ENCODE measurements at regions of chr13 and their contacts with region 1.

Region 1: DNA sequence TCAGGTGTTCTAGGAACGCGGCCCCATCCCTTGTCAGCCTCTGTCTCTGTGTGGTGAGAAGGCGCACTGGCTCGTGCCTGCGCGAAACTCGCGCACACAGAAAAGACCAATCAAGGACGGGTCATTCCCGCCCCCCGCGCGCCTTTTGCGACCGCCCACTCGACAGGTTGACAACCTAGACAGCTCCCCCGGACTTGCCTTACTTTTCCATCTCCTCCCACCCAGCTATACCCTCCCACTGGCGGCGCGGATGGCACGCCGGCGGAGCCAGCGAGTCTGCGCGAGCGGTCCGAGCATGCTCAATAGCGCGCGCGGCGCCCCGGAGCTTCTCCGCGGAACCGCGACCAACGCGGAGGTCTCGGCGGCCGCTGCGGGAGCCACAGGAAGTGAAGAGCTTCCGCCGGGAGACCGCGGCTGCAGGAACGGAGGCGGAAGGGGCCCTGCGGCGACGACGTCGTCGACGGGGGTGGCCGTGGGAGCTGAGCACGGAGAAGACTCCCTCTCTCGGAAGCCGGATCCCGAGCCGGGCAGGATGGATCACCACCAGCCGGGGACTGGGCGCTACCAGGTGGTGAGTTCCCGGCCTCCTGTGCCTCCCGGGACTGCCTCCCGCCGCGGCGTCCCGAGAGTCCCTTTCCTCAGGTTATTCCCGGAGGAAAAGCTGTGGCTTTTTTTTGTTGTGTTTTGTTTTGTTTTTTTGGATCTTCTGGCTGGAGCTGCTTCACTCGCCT is at the start of gene NDFIP2:
- DNase-seq: peak; percentile 92
- ATAC-seq: peak; percentile 95
- total RNA-seq, gene NDFIP2: 33.9 TPM

Region 2: DNA sequence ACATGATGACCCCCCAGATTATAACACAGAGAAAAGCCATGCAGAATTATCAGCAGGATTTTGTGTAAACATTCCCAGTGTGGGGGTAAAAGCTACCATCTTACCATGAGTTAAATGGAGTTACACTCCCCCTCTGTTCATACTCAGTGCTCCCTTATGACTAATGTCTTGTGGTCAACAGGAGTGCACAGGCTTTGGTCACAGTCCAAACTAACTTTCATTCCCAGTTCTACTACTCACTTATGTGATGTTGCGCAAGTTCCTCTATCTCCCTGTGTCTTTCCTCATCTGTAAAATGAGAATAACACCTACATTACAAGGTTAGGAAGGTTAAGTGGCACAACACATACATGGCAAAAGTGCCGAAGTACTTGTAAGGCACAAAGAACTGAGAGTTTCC is 353.0 kb before region 1 on chr13:
- intact Hi-C with region 1: no loop called
- DNase-seq: no peak
- ATAC-seq: no peak

Region 3: DNA sequence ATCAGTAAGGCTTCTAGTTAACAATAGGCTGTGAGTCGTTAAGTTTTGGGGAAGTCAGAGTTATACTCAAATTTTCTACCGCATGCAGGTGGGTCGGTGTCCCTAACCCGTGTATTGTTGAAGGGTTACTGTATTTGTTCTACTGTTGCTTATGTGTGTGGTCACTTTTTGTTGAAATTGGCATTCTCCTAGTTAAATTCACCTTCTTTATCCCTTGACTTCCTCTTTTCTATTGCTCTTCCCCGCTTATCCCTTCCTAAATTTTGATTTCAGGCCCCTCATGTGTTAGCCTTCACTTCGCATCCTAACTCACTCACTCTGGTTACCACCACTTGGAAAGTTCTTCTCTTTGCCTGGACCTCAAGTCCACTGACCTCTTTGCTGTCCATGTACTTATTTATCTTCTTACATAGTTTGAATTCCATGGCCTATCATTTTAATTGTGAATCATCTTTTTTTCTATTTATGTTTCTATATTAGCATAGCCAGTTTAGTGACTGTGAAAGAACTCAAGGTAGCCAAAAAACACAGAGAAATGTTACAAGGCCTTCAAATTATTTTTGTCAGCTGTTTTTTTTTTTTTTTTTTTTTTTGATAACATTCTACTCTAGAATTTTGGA is 52.8 kb after region 1 on chr13:
- intact Hi-C with region 1: loop called (anchors 5 kb)
- DNase-seq: no peak
- ATAC-seq: no peak

Measured in Right ventricle myocardium superior (tissue), 1 donor.